Activated CD4-positive, alpha-beta T cell treated with anti-CD3 and anti-CD28 coated beads, Interleukin-2, amount 10 ng/mL, durations not matched to agents 24 days and 14 days (primary cell): ENCODE measurements at regions of chr2 and their contacts with region 1.

Region 1: DNA sequence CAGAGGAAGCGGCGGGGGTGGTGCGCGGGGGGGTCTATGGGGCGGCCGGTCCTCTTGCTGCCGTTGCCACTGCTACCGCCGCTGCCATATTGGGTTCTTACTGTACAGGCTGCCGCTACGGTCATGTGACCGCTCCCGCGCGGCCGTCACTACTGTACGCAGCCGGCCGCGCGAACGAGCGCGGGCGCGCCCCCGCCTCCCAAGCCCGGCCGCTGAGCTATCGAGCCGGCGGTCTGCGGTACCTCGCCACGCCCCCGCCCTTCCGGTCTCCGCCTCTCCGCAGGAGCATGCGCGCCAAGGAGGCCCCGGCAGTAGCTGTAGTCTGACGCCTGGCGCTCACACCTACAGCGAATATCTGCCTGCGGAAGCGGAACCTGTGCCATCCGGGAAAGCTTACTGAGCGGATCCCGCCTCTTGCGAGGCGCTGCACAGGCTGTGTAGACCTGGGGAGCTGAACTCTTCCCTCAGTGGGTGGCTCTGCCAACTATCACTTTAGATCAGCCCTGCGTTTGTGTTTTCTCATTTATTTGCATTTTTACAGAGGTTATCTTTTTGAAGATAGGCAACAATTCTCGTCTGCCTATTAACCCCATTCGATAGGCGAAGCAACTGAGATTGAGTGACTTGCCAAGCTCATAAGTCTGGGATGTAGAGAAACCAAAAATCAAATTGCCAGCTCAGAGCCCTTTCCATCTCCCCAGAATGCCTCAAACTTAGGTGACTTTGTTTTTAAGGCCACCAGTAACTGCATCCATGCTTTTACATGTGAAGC is at the start of gene ASXL2:
- DNase-seq: peak; percentile 99
- H3K4me3 Mint-ChIP-seq: peak within 1 kb of the TSS; percentile 96
- H3K27ac Mint-ChIP-seq: peak within 1 kb of the TSS; percentile 96
- H3K4me1 Mint-ChIP-seq: peaks cover 38% of the 10 kb centered on the region
- H3K27me3 Mint-ChIP-seq: peaks cover 4% of the 10 kb centered on the region
- total RNA-seq, gene ASXL2: 57.1 and 57.4 TPM in 2 replicates

Region 2: DNA sequence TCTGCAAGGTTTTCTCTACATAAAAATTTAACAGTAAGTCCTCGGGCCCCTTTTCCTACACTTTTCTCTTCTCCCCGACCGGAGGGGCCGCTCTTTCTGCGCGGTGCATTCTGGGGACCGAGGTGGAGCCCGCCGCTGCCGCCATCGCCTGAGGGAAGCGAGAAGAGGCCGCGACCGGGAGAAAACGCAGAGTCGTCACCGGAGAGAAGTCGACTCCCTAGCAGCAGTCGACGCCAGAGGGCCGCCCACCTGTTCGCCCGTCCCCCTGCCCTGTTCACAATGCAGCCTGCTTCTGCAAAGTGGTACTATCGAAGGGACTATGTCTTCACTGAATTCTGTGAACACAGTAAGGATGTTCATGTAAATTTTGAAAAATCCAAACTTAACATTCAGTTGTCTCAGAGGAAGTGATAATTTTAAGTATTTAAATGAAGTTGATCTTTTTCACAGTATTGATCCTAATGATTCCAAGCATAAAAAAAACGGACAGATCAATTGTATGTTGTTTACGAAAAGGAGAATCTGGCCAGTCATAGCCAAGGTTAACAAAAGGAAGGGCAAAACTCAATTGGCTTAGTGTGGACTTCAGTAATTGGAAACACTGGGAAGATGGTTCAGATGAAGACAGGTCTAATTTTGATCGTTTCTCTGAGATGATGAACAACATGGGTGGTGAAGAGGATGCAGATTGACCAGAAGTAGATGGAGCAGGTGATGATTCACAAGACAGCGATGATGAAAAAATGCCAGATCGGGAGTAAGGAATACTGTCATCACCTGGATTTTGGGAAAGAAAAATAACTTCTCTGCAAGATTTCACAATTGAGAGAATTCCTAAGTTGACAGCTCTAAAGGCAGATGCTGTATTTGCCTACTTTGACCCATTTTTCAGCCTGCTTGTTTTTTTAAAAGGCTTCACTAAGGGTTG is 56.1 kb before region 1 on chr2:
- intact Hi-C with region 1: loop called (anchors 1 kb)
- DNase-seq: peak; percentile 88
- H3K4me3 Mint-ChIP-seq: peak overlapping the region; percentile 82
- H3K27ac Mint-ChIP-seq: peak overlapping the region; percentile 79
- H3K4me1 Mint-ChIP-seq: peaks cover 59% of the 10 kb centered on the region
- H3K27me3 Mint-ChIP-seq: no peaks in the 10 kb centered on the region

Region 3: DNA sequence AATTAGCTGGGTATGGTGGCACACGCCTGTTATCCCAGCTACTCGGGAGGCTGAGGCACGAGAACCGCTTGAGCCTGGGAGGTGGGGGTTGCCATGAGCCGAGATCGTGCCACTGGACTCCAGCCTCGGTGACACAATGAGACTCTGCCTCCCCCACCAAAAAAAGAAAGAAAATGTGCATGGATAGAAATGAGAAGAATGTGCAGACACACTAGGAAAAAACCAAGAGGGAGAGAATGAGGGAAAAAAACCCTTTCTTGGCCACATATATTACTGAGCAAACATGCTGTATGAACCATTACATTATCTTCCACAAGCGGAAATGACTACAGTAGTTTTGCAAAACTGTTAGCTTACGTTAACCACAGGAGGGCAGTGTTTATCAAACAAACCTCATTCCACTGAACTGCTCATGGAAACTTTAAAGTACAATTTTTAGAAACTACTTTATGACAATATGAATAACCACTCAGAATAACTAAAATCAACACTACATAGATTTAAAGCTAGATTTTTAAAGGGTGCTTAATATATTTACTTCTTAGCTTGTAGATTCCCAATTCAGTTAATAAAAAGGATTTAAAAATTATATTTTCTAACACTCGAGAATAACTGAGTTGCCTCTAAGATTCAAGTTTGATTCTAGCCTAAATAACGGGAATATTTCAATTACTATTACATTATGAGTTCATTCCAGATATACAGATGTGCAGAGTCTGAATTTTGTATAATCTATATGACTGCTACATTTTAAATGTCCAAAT is 26.6 kb before region 1 on chr2:
- intact Hi-C with region 1: loop called (anchors 1 kb)
- DNase-seq: peak; percentile 85
- H3K4me3 Mint-ChIP-seq: peak overlapping the region; percentile 70
- H3K27ac Mint-ChIP-seq: peak overlapping the region; percentile 87
- H3K4me1 Mint-ChIP-seq: peaks cover 43% of the 10 kb centered on the region
- H3K27me3 Mint-ChIP-seq: no peaks in the 10 kb centered on the region

Region 4: DNA sequence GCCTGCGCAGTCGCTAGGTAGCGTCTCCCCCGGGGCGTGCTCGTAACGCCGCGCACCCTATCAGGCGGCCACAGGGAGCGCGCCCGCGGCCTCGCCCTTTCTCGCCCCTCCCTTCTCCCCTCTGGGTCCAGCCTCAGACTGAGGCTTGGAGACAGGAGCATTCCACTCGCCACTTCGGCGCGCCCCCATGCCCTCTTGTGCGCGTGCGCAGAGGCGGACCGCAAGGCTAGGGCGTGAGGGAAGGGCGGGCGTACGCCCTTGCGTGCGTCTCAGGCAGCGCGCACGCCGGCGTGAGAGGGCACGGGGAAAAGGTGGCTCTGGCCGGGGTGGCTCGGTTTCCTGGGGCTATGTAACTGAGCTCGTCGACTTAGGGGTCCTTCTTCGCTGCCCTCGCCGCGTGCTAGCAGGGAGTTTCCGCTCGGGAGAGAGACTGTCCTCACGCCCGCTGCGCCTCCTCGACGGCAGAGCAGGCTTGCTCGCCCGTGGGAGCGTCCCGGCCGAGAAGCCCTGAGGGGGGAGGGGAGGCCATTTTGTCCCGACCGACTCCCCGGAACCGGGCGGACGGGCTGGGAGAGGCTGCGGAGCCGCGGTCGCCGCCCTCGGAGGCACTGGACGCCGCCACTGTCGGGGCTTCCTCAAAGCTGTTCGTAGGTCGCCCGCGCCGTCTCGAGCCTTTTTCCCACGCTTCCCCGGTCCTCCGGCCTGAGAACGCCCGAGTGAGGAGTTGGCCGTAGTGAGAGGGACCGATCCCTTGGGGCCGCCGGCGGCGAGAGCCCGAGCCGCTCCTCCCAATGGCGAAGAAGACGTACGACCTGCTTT is 155.5 kb after region 1 on chr2 and contains the start of gene RAB10:
- intact Hi-C with region 1: loop called (anchors 1 kb)
- DNase-seq: peak; percentile 100
- H3K4me3 Mint-ChIP-seq: peak within 1 kb of the TSS; percentile 93
- H3K27ac Mint-ChIP-seq: peak within 1 kb of the TSS; percentile 95
- H3K4me1 Mint-ChIP-seq: peaks cover 26% of the 10 kb centered on the region
- H3K27me3 Mint-ChIP-seq: peaks cover 1% of the 10 kb centered on the region
- total RNA-seq, gene RAB10: 133 and 141 TPM in 2 replicates

Region 5: DNA sequence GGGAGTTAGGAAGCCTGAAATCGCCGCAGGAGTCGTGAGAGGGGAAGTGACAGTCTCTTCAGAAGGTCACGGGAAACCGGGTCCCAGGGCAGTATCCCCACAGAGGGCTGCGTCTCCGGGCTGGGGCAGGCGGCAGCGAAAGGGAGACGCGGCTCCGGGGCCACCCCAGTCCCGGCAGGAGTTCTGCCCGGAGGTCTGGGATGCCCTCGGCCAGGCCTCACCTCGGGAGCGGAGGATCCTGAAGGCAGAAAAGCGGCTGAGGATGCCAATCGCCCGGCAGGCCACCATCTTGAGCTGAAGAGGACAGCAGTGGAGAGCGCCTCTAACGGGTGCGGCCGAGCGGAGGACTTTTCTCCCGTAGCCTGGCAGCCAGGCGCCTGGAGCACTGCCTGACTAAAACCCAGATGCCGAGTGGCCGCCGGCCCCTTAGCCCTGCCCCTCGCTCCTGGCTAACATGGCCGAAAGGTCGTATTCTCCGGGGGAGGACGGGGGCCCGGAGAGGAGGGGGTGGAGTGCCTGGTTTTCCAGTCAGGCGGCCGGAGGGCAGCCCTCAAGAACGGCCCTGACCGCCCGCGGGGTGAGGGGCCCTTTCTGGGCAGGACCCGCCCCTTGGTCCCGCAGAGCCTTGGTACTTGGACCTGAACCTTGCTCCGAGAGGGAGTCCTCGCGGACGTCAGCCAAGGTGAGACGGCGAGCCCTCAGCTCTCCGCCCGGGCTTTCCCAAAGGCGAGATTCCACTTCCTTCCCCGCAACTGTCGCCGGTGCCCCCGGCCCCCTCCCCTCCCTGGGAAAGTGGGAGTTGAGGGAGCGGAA is 366.0 kb after region 1 on chr2 and contains the starts of genes HADHA and HADHB:
- intact Hi-C with region 1: loop called (anchors 10 kb)
- DNase-seq: peak; percentile 94
- H3K4me3 Mint-ChIP-seq: peak within 1 kb of the TSS; percentile 100
- H3K27ac Mint-ChIP-seq: peak within 1 kb of the TSS; percentile 100
- H3K4me1 Mint-ChIP-seq: peaks cover 53% of the 10 kb centered on the region
- H3K27me3 Mint-ChIP-seq: peaks cover 6% of the 10 kb centered on the region
- total RNA-seq, gene HADHA: 110 and 112 TPM in 2 replicates
- total RNA-seq, gene HADHB: 81.2 and 86.6 TPM in 2 replicates